MCF 10A (cell line): ENCODE measurements at regions of chr1 and their contacts with region 1.

Region 1: GRCh38 chr1:105793536-105794146 is 1262.8 kb upstream of the PRMT6 start:
- DNase-seq: peak; percentile 64
- H3K4me3 Mint-ChIP-seq: no peak overlapping the region
- H3K27ac Mint-ChIP-seq: no peak overlapping the region
- H3K4me1 Mint-ChIP-seq: no peaks in the 10 kb centered on the region
- H3K27me3 Mint-ChIP-seq: peaks cover 12% of the 10 kb centered on the region
- CTCF ChIP-seq: peak; percentile 87

Region 2: GRCh38 chr1:103948526-103948925 is 1845.1 kb before region 1 on chr1:
- CTCF ChIA-PET with region 1: interaction called, 3 read pairs
- POLR2A ChIA-PET with region 1: no interaction called
- intact Hi-C with region 1: loop called (anchors 5 kb)
- DNase-seq: peak; percentile 30
- H3K4me3 Mint-ChIP-seq: no peak overlapping the region
- H3K27ac Mint-ChIP-seq: no peak overlapping the region
- H3K4me1 Mint-ChIP-seq: no peaks in the 10 kb centered on the region
- H3K27me3 Mint-ChIP-seq: no peaks in the 10 kb centered on the region
- CTCF ChIP-seq: peak; percentile 44

Region 3: GRCh38 chr1:104648269-104648691 is 1145.4 kb before region 1 on chr1:
- CTCF ChIA-PET with region 1: interaction called, 5 read pairs
- POLR2A ChIA-PET with region 1: no interaction called
- intact Hi-C with region 1: loop called (anchors 1 kb)
- DNase-seq: peak; percentile 41
- H3K4me3 Mint-ChIP-seq: no peak overlapping the region
- H3K27ac Mint-ChIP-seq: no peak overlapping the region
- H3K4me1 Mint-ChIP-seq: no peaks in the 10 kb centered on the region
- H3K27me3 Mint-ChIP-seq: no peaks in the 10 kb centered on the region
- CTCF ChIP-seq: peak; percentile 45

Region 4: DNA sequence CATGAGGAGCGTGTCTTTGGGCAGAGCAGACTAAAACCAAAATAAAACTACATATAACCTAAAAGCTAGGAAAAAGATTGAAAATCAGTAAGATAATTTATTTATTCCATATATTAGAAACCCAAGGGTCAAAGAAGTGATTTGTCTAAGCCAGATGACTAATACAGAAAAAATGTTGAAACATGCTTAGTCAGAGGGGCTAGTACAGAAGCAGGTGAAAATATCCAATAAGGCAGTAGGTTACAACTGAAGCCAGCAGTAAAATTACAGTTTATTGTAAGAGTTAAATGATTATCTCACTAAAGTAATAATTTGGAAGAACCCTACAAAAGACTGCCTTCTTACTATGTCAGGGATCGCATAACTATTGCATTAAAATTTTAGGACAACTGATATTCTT is 71.9 kb after region 1 on chr1:
- CTCF ChIA-PET with region 1: no interaction called
- POLR2A ChIA-PET with region 1: no interaction called
- intact Hi-C with region 1: no loop called
- DNase-seq: peak; percentile 58
- H3K4me3 Mint-ChIP-seq: no peak overlapping the region
- H3K27ac Mint-ChIP-seq: no peak overlapping the region
- H3K4me1 Mint-ChIP-seq: peaks cover 7% of the 10 kb centered on the region
- H3K27me3 Mint-ChIP-seq: no peaks in the 10 kb centered on the region
- CTCF ChIP-seq: no peak

Region 5: DNA sequence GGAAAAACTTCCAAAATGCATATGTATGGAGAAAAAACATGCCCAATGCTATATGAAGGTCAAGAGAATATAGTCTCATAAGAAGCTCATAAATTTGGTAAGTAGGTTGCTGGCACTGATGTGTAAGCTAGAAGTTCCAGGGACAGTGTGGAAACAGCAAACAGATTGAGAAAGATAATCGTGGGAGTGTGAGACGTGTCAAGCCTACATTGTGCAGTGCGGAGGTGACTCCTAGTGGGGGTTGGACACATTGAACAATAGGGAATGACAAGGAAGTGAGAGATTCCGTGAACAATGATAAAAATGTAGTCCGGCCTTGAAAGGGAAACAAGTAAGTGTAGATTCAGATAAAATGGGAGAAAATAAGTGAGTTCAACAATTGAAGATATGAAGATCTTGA is 474.4 kb after region 1 on chr1:
- CTCF ChIA-PET with region 1: no interaction called
- POLR2A ChIA-PET with region 1: no interaction called
- intact Hi-C with region 1: loop called (anchors 5 kb)
- DNase-seq: peak; percentile 71
- H3K4me3 Mint-ChIP-seq: no peak overlapping the region
- H3K27ac Mint-ChIP-seq: no peak overlapping the region
- H3K4me1 Mint-ChIP-seq: peaks cover 10% of the 10 kb centered on the region
- H3K27me3 Mint-ChIP-seq: no peaks in the 10 kb centered on the region
- CTCF ChIP-seq: peak; percentile 49

Region 6: GRCh38 chr1:107142140-107142542 is 1348.5 kb after region 1 on chr1:
- CTCF ChIA-PET with region 1: interaction called, 3 read pairs
- POLR2A ChIA-PET with region 1: no interaction called
- intact Hi-C with region 1: loop called (anchors 5 kb)
- DNase-seq: peak; percentile 55
- H3K4me3 Mint-ChIP-seq: peak overlapping the region; percentile 76
- H3K27ac Mint-ChIP-seq: no peak overlapping the region
- H3K4me1 Mint-ChIP-seq: peaks cover 26% of the 10 kb centered on the region
- H3K27me3 Mint-ChIP-seq: no peaks in the 10 kb centered on the region
- CTCF ChIP-seq: peak; percentile 47